ENCODE measurements at regions of chr10 and their contacts with region 1.

Region 1: DNA sequence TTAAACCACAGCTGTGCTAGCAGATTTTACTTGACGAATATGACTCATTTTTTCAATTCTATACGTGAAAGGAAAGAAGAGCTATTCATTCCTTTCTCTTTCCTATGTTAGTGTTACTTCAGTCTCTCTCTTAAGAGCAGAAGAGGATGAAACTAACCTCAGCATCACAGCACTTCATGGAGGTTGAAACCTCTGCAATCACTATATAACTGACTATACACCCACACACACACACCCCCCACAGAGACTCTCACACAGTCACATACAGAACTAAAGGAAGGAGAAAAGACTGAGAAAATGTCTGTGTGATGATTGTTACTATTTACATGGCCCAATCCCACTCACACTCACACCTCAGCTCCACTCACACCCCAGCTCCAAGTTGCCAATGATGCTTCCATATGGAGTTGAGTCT is 104.2 kb downstream of the KIF20B start:
- DNase-seq: no peak
- H3K4me3 ChIP-seq: no peak overlapping the region
- H3K27ac ChIP-seq: no peak overlapping the region
- H3K4me1 ChIP-seq: no peaks in the 10 kb centered on the region
- H3K27me3 ChIP-seq: no peaks in the 10 kb centered on the region
- CTCF ChIP-seq: no peak
- EP300 ChIP-seq: no peak
- POLR2A ChIP-seq: no peak

Region 2: DNA sequence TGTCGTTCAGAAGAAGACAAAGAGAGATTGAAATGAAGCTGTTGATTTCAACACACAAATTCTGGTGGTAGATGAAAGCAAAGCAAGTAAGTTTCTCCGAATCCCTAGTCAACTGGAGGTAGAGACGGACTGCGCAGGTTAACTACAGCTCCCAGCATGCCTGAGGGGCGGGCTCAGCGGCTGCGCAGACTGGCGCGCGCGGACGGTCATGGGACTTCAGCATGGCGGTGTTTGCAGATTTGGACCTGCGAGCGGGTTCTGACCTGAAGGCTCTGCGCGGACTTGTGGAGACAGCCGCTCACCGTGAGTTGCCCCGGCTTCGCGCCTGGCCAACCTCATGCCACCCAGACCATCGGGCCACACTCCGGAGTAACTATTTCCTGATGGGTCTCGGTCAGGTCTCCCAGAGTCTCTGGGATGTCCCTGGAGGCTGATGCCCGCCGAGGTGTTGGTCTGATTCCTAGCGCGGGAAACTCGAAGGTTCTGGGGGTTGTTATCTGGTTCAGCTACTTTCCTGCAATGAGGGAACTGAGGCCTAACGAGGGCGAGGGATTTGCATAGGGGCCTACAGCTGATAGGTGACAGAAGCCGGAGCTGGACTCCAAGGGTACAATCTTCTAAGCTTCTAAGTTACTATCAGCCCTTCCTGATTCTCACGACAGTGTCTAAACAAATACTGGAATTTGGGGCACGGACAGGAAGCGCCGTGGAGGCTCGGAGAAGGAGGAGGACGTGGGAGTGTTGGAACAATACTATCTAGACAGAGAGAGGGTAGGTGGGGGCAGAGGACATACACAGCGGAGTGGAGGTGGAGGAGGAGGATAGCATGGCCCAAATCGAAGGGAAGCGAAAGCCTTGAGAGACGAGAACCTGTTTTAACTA is 1066.4 kb after region 1 on chr10 and contains the start of gene RPP30:
- in situ Hi-C with region 1: loop called in 1 of 4 experiments (anchors 25 kb)
- intact Hi-C with region 1: no loop called
- DNase-seq: peak; percentile 85
- H3K4me3 ChIP-seq: peak within 1 kb of the TSS; percentile 55 to 88 (median 79)
- H3K27ac ChIP-seq: peak within 1 kb of the TSS; percentile 66 to 83 (median 74)
- H3K4me1 ChIP-seq: peaks cover 11 to 21% (median 18%) of the 10 kb centered on the region in 4 donors
- H3K27me3 ChIP-seq: peaks cover 11% of the 10 kb centered on the region
- CTCF ChIP-seq: peak in 1 of 5 experiments; percentile 23
- EP300 ChIP-seq: no peak
- POLR2A ChIP-seq: peak; percentile 43
- total RNA-seq, gene RPP30: 4.6 to 48.3 (median 18.7) TPM